Activated naive CD4-positive, alpha-beta T cell treated with anti-CD3 and anti-CD28 coated beads, Interleukin-2, amount 10 ng/mL, durations not matched to agents 7 days and 5 days (primary cell): ENCODE measurements at regions of chr1 and their contacts with region 1.

Region 1: GRCh38 chr1:179002552-179003345 is 22.9 kb upstream of the FAM20B start:
- DNase-seq: peak; percentile 75
- H3K4me3 Mint-ChIP-seq: no peak overlapping the region
- H3K27ac Mint-ChIP-seq: no peak overlapping the region
- H3K4me1 Mint-ChIP-seq: peaks cover 15% of the 10 kb centered on the region
- H3K27me3 Mint-ChIP-seq: no peaks in the 10 kb centered on the region

Region 2: GRCh38 chr1:178532392-178532791 is 470.4 kb before region 1 on chr1:
- CTCF ChIA-PET with region 1: interaction called, 13 read pairs
- DNase-seq: peak; percentile 81
- H3K4me3 Mint-ChIP-seq: no peak overlapping the region
- H3K27ac Mint-ChIP-seq: no peak overlapping the region
- H3K4me1 Mint-ChIP-seq: peaks cover 3% of the 10 kb centered on the region
- H3K27me3 Mint-ChIP-seq: no peaks in the 10 kb centered on the region

Region 3: DNA sequence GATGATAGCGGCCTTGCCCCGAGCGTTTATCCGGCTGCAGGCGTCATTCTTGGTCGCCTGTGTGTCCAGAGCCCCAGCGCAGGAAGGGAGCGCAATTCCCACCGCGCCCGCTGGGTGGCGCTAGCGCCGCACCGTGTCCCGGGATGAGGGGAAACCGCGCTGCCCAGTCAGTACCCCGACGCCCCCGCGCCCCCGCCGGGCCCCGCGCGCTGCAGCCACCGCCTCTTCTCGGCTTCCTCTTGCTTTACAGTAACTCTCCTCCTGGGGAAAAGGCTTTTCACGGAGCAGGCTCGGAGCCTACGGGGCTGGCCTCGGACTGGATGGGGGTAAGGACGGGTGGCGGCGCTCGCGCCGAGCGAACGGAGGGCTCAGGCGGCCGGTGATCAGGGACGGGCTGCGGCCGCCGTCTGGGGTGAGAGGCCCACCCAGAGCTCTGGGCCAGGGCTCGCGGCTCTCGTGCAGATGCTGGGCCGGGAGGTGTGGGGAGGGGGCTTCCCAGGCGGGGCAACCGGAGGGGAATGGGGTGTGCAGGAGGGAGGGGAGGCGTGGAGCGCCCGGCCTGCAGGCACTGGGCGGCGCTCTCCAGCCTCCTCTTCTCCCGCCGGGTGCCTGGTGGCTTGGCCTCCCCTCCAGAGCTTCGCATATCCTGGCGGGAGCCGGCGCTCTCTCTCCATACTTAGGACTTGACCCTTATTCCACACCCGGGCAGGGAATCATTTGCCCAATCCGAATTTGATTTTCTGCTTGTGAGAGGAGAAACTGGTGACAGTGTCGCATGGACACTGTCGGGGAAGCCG is 460.0 kb before region 1 on chr1:
- CTCF ChIA-PET with region 1: interaction called, 23 read pairs
- DNase-seq: peak; percentile 89
- H3K4me3 Mint-ChIP-seq: peak overlapping the region; percentile 86
- H3K27ac Mint-ChIP-seq: peak overlapping the region; percentile 84
- H3K4me1 Mint-ChIP-seq: peaks cover 9% of the 10 kb centered on the region
- H3K27me3 Mint-ChIP-seq: no peaks in the 10 kb centered on the region

Region 4: GRCh38 chr1:178768423-178768822 is 234.3 kb before region 1 on chr1:
- CTCF ChIA-PET with region 1: interaction called, 76 read pairs
- DNase-seq: peak; percentile 37
- H3K4me3 Mint-ChIP-seq: no peak overlapping the region
- H3K27ac Mint-ChIP-seq: no peak overlapping the region
- H3K4me1 Mint-ChIP-seq: no peaks in the 10 kb centered on the region
- H3K27me3 Mint-ChIP-seq: no peaks in the 10 kb centered on the region

Region 5: GRCh38 chr1:178774263-178774662 is 228.5 kb before region 1 on chr1:
- CTCF ChIA-PET with region 1: interaction called, 76 read pairs
- DNase-seq: no peak
- H3K4me3 Mint-ChIP-seq: no peak overlapping the region
- H3K27ac Mint-ChIP-seq: no peak overlapping the region
- H3K4me1 Mint-ChIP-seq: no peaks in the 10 kb centered on the region
- H3K27me3 Mint-ChIP-seq: no peaks in the 10 kb centered on the region

Region 6: GRCh38 chr1:178962853-178963711 is 39.7 kb before region 1 on chr1:
- CTCF ChIA-PET with region 1: no interaction called
- DNase-seq: no peak
- H3K4me3 Mint-ChIP-seq: no peak overlapping the region
- H3K27ac Mint-ChIP-seq: no peak overlapping the region
- H3K4me1 Mint-ChIP-seq: no peaks in the 10 kb centered on the region
- H3K27me3 Mint-ChIP-seq: peaks cover 4% of the 10 kb centered on the region